WTC11 (cell line): ENCODE measurements at regions of chr3 and their contacts with region 1.

Region 1: GRCh38 chr3:111339017-111339416 is 203.0 kb upstream of the CD96 start:
- DNase-seq: no peak
- ATAC-seq: no peak
- H3K4me3 Mint-ChIP-seq: no peak overlapping the region
- H3K27ac Mint-ChIP-seq: no peak overlapping the region
- H3K4me1 Mint-ChIP-seq: peaks cover 15% of the 10 kb centered on the region
- H3K27me3 Mint-ChIP-seq: no peaks in the 10 kb centered on the region; the same call in 1 of the 2 replicates
- CTCF ChIP-seq: no peak

Region 2: DNA sequence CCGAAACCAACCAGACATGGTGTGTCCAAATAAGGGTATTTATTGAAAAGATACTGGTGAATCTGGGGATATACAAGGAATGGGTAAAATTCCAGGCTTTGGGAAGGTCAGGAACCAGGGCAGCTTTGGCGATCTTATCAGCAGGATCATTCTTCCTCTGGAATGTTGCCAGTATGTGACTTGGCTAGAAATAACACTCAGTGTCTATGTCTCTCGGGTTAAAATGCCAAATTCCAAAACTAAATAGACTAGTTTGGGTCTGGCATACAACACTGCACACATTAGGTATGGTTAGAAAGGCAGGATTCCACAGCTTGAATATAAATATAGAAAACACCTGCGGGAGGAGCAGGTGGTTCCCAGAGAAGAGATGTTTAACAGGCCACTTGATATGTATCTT is 17.2 kb before region 1 on chr3:
- CTCF ChIA-PET with region 1: no interaction called
- POLR2A ChIA-PET with region 1: no interaction called
- DNase-seq: no peak
- ATAC-seq: no peak
- H3K4me3 Mint-ChIP-seq: no peak overlapping the region
- H3K27ac Mint-ChIP-seq: no peak overlapping the region
- H3K4me1 Mint-ChIP-seq: no peaks in the 10 kb centered on the region
- H3K27me3 Mint-ChIP-seq: peaks cover 3% of the 10 kb centered on the region
- CTCF ChIP-seq: no peak

Region 3: DNA sequence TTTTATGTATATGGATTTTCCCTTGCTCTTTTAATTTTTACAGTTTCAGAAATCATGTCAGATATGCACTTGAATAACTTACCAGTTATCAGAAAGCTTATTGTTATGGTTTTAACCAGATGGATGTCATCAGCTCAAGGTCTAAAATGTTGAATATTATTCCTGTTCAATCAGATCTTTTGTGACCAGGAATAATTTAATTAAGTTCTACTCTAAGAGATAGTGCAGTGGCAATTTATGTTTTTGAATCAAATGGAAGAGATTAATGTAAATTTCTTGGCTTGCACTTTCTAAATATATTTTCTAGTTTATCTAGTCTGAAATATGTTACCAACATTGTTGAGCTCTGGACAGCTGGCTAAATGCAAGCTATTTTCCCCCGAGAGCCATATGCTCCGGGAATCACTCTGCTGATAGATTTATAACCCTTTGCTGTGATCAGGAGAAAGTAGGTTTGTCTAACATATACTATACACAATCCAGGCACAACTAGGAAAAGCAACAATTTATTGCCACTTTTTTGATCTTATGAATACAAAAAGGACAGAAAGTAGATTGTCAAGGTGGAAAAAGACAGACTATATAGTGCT is 126.2 kb after region 1 on chr3:
- CTCF ChIA-PET with region 1: no interaction called
- POLR2A ChIA-PET with region 1: interaction called, 10 read pairs
- DNase-seq: no peak
- ATAC-seq: no peak
- H3K4me3 Mint-ChIP-seq: no peak overlapping the region
- H3K27ac Mint-ChIP-seq: no peak overlapping the region
- H3K4me1 Mint-ChIP-seq: no peaks in the 10 kb centered on the region
- H3K27me3 Mint-ChIP-seq: no peaks in the 10 kb centered on the region
- CTCF ChIP-seq: no peak